PC-3 (cell line): ENCODE measurements at regions of chr5 and their contacts with region 1.

Region 1: DNA sequence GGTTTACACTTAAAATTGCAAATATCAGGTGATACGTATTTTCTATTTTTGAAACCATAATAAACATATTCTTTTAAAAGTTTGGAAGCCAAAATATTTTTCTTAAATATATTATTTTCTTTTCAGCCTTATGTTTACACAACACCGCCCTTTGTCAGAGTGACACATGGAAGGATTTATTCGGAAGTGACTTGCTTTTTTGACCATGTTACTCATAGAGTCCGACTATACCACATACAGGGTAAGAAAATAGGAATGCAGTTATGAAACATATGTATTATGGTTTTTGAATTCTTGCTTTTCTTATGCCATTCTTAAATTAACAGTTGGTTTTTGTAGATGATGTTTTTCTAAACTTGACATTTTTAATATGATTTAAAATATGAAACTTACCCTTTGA is 133.9 kb downstream of the MAN2A1 start:
- DNase-seq: peak; percentile 92
- ATAC-seq: peak; percentile 71
- H3K4me3 ChIP-seq: peak overlapping the region; percentile 39
- H3K27ac ChIP-seq: peak overlapping the region; percentile 89
- H3K4me1 ChIP-seq: peaks cover 50% of the 10 kb centered on the region
- H3K27me3 ChIP-seq: no peaks in the 10 kb centered on the region
- CTCF ChIP-seq: no peak

Region 2: GRCh38 chr5:108615216-108615615 is 1208.4 kb before region 1 on chr5:
- CTCF ChIA-PET with region 1: no interaction called
- POLR2A ChIA-PET with region 1: no interaction called
- intact Hi-C with region 1: loop called (anchors 5 kb)
- DNase-seq: peak; percentile 56
- ATAC-seq: peak; percentile 70
- H3K4me3 ChIP-seq: no peak overlapping the region
- H3K27ac ChIP-seq: no peak overlapping the region
- H3K4me1 ChIP-seq: 0 out of 2 replicates have a peak, but pooled peaks cover 4% of the 10 kb centered on the region
- H3K27me3 ChIP-seq: no peaks in the 10 kb centered on the region
- CTCF ChIP-seq: no peak

Region 3: GRCh38 chr5:109668668-109669422 is 154.8 kb before region 1 on chr5:
- CTCF ChIA-PET with region 1: no interaction called
- POLR2A ChIA-PET with region 1: no interaction called
- intact Hi-C with region 1: no loop called
- DNase-seq: no peak
- ATAC-seq: no peak
- H3K4me3 ChIP-seq: no peak overlapping the region
- H3K27ac ChIP-seq: no peak overlapping the region
- H3K4me1 ChIP-seq: no peaks in the 10 kb centered on the region
- H3K27me3 ChIP-seq: no peaks in the 10 kb centered on the region
- CTCF ChIP-seq: no peak

Region 4: GRCh38 chr5:109876941-109877650 is 53.5 kb after region 1 on chr5:
- CTCF ChIA-PET with region 1: no interaction called
- POLR2A ChIA-PET with region 1: no interaction called
- intact Hi-C with region 1: loop called (anchors 1 kb)
- DNase-seq: peak; percentile 94
- ATAC-seq: peak; percentile 85
- H3K4me3 ChIP-seq: peak overlapping the region; percentile 43; the same call in 1 of the 2 replicates
- H3K27ac ChIP-seq: peak overlapping the region; percentile 83
- H3K4me1 ChIP-seq: peaks cover 26% of the 10 kb centered on the region
- H3K27me3 ChIP-seq: no peaks in the 10 kb centered on the region
- CTCF ChIP-seq: no peak

Region 5: DNA sequence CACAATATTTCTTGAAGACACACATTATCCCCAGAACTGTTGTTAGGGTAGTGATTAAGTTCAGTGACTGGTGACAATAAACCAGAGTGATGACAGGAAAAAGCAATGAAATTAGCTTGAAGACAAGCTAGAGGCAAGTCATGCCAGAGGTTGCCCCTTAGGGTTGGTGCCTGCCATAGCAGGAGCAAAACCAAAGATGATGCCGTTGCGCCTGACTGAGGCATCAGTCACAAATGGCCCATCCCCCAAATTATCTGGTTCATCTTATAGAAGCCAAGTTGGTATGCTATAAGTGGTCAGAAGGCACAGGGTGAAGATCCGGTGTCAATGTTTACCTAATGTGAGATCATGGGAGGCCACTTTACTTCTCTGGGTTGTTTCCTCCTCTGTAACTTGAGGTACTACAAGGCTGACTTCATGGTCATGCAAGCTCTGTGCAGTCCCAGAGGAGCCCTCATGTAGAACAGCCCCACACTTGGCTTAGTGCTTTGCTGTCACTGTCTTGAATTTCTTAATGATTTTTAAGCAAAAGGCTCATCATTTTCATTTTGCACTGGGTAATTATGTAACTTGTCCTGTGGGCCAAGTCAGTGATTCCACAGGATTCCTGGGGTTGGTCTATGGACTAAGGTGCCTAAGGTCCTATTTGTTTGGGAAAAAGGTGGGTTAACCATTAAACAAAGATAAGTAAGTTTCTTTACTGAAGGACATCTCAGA is 77.5 kb after region 1 on chr5:
- CTCF ChIA-PET with region 1: no interaction called
- POLR2A ChIA-PET with region 1: no interaction called
- intact Hi-C with region 1: loop called (anchors 2 kb)
- DNase-seq: peak; percentile 98
- ATAC-seq: peak; percentile 86
- H3K4me3 ChIP-seq: peak overlapping the region; percentile 39; the same call in 1 of the 2 replicates
- H3K27ac ChIP-seq: peak overlapping the region; percentile 94
- H3K4me1 ChIP-seq: peaks cover 43% of the 10 kb centered on the region
- H3K27me3 ChIP-seq: no peaks in the 10 kb centered on the region
- CTCF ChIP-seq: peak; percentile 39; the same call in 1 of the 2 replicates

Region 6: GRCh38 chr5:109944461-109944860 is 120.9 kb after region 1 on chr5:
- CTCF ChIA-PET with region 1: no interaction called
- POLR2A ChIA-PET with region 1: no interaction called
- intact Hi-C with region 1: loop called (anchors 5 kb)
- DNase-seq: peak; percentile 14
- ATAC-seq: no peak
- H3K4me3 ChIP-seq: no peak overlapping the region
- H3K27ac ChIP-seq: no peak overlapping the region
- H3K4me1 ChIP-seq: peaks cover 24% of the 10 kb centered on the region
- H3K27me3 ChIP-seq: no peaks in the 10 kb centered on the region
- CTCF ChIP-seq: no peak